ENCODE measurements at regions of chr2 and their contacts with region 1.

Region 1: GRCh38 chr2:28751252-28751955 is at the start of gene PPP1CB:
- DNase-seq: peak; percentile 93
- H3K4me3 ChIP-seq: peak within 1 kb of the TSS; percentile 73
- H3K27ac ChIP-seq: peak within 1 kb of the TSS; percentile 95
- H3K4me1 ChIP-seq: peaks cover 6% of the 10 kb centered on the region
- H3K27me3 ChIP-seq: no peaks in the 10 kb centered on the region
- CTCF ChIP-seq: no peak
- total RNA-seq, gene PPP1CB: 273 to 478 TPM

Region 2: DNA sequence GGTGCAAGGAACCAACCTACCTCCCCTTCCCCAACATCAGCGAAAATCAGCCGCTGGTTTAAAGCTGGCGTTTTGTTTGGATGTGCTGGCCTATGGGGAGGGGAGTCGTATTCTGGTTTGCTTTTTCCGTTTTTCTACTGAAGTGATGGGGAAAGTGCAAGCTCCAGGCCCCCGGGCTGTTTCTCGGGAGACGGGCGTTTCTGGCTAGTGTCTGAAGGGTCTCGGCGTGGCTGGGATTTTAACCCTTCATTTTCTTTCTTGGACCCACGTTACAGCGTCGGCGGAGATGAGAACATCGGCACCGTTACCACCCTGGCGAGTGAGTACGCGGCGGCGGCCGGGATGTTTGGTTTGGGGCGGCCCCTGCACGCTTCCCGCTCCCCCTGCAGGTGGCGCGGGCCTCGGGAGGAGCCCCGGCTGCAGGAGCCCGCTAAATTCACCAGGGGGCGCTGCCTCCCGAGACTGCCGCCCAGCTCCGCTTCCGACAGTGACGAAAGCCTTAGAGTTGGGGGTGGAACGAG is 184.8 kb before region 1 on chr2:
- intact Hi-C with region 1: loop called (anchors 10 kb)
- DNase-seq: peak; percentile 87
- H3K4me3 ChIP-seq: peak overlapping the region; percentile 33
- H3K27ac ChIP-seq: no peak overlapping the region
- H3K4me1 ChIP-seq: no peaks in the 10 kb centered on the region
- H3K27me3 ChIP-seq: no peaks in the 10 kb centered on the region
- CTCF ChIP-seq: peak; percentile 99

Region 3: GRCh38 chr2:28594289-28595108 is 156.9 kb before region 1 on chr2:
- intact Hi-C with region 1: loop called (anchors 2 kb)
- DNase-seq: peak; percentile 96
- H3K4me3 ChIP-seq: no peak overlapping the region
- H3K27ac ChIP-seq: peak overlapping the region; percentile 50
- H3K4me1 ChIP-seq: no peaks in the 10 kb centered on the region
- H3K27me3 ChIP-seq: no peaks in the 10 kb centered on the region
- CTCF ChIP-seq: peak; percentile 76

Region 4: GRCh38 chr2:28606986-28607441 is 144.4 kb before region 1 on chr2:
- intact Hi-C with region 1: loop called (anchors 5 kb)
- DNase-seq: no peak
- H3K4me3 ChIP-seq: no peak overlapping the region
- H3K27ac ChIP-seq: no peak overlapping the region
- H3K4me1 ChIP-seq: peaks cover 3% of the 10 kb centered on the region
- H3K27me3 ChIP-seq: no peaks in the 10 kb centered on the region
- CTCF ChIP-seq: no peak

Region 5: GRCh38 chr2:28621172-28622100 is 130.0 kb before region 1 on chr2:
- intact Hi-C with region 1: loop called (anchors 5 kb)
- DNase-seq: peak; percentile 84
- H3K4me3 ChIP-seq: no peak overlapping the region
- H3K27ac ChIP-seq: peak overlapping the region; percentile 85
- H3K4me1 ChIP-seq: peaks cover 26% of the 10 kb centered on the region
- H3K27me3 ChIP-seq: no peaks in the 10 kb centered on the region
- CTCF ChIP-seq: peak; percentile 33

Region 6: GRCh38 chr2:28661589-28662001 is 89.8 kb before region 1 on chr2:
- intact Hi-C with region 1: loop called (anchors 5 kb)
- DNase-seq: peak; percentile 85
- H3K4me3 ChIP-seq: no peak overlapping the region
- H3K27ac ChIP-seq: peak overlapping the region; percentile 58
- H3K4me1 ChIP-seq: peaks cover 13% of the 10 kb centered on the region
- H3K27me3 ChIP-seq: no peaks in the 10 kb centered on the region
- CTCF ChIP-seq: no peak

Region 7: GRCh38 chr2:28958689-28959088 is 207.3 kb after region 1 on chr2:
- intact Hi-C with region 1: no loop called
- DNase-seq: peak; percentile 53
- H3K4me3 ChIP-seq: no peak overlapping the region
- H3K27ac ChIP-seq: no peak overlapping the region
- H3K4me1 ChIP-seq: no peaks in the 10 kb centered on the region
- H3K27me3 ChIP-seq: no peaks in the 10 kb centered on the region
- CTCF ChIP-seq: peak; percentile 32